ENCODE measurements at regions of chr10 and their contacts with region 1.

Region 1: DNA sequence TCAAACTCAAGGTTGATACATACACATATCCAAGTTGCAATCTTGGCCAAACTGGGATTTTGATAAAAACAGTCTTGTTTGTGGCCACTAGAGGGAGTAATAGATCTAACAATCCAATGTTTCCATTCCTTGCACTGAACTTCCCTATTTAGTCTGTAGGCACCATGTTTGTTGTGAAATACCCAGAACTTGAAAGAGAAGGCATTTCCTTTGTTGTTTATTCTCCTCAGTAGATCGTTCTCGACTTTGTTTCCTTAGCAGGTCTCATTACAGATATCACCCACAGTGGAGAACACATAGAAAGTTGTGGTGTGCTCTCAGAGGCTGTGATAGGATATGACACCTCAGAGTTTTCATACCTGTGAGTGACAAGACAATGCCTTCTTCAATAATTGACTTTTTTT is 70.3 kb upstream of the MXI1 start:
- DNase-seq: no peak
- ATAC-seq: peak; percentile 82
- H3K4me3 Mint-ChIP-seq: no peak overlapping the region
- H3K27ac Mint-ChIP-seq: no peak overlapping the region
- H3K4me1 Mint-ChIP-seq: peaks cover 31% of the 10 kb centered on the region
- H3K27me3 Mint-ChIP-seq: no peaks in the 10 kb centered on the region

Region 2: DNA sequence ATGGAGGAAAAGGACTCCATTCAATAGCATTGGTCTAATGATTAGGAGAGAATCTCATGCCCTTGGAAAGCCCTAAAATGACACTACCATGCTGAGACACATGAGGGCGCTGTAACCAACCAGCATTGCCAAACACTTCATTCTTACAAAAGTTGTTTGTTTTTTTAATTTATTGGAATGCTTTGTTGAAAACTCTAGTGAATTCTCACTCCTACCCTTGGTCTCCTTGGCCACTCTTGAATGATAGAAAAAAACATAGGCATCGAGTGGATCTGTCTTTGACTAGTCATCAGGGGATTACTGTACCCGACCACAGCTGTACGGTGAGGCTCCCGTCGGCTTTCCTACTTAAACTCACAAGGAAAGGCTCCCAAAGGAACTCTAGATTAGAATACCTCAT is 158.7 kb before region 1 on chr10:
- CTCF ChIA-PET with region 1: interaction called, 10 read pairs
- POLR2A ChIA-PET with region 1: no interaction called
- DNase-seq: peak; percentile 73
- ATAC-seq: peak; percentile 36
- H3K4me3 Mint-ChIP-seq: no peak overlapping the region
- H3K27ac Mint-ChIP-seq: no peak overlapping the region
- H3K4me1 Mint-ChIP-seq: no peaks in the 10 kb centered on the region
- H3K27me3 Mint-ChIP-seq: peaks cover 3% of the 10 kb centered on the region

Region 3: GRCh38 chr10:110158051-110159005 is 21.2 kb after region 1 on chr10:
- CTCF ChIA-PET with region 1: interaction called, 12 read pairs
- POLR2A ChIA-PET with region 1: no interaction called
- DNase-seq: no peak
- ATAC-seq: no peak
- H3K4me3 Mint-ChIP-seq: no peak overlapping the region
- H3K27ac Mint-ChIP-seq: no peak overlapping the region
- H3K4me1 Mint-ChIP-seq: peaks cover 43% of the 10 kb centered on the region
- H3K27me3 Mint-ChIP-seq: peaks cover 75% of the 10 kb centered on the region

Region 4: GRCh38 chr10:110218632-110219031 is 81.5 kb after region 1 on chr10:
- CTCF ChIA-PET with region 1: interaction called, 38 read pairs
- POLR2A ChIA-PET with region 1: no interaction called
- DNase-seq: no peak
- ATAC-seq: no peak
- H3K4me3 Mint-ChIP-seq: no peak overlapping the region
- H3K27ac Mint-ChIP-seq: no peak overlapping the region
- H3K4me1 Mint-ChIP-seq: peaks cover 69% of the 10 kb centered on the region
- H3K27me3 Mint-ChIP-seq: peaks cover 3% of the 10 kb centered on the region

Region 5: GRCh38 chr10:110273474-110273873 is 136.3 kb after region 1 on chr10:
- CTCF ChIA-PET with region 1: interaction called, 81 read pairs
- POLR2A ChIA-PET with region 1: no interaction called
- DNase-seq: peak; percentile 36
- ATAC-seq: peak; percentile 55
- H3K4me3 Mint-ChIP-seq: no peak overlapping the region
- H3K27ac Mint-ChIP-seq: no peak overlapping the region
- H3K4me1 Mint-ChIP-seq: peaks cover 31% of the 10 kb centered on the region
- H3K27me3 Mint-ChIP-seq: peaks cover 24% of the 10 kb centered on the region

Region 6: GRCh38 chr10:110285501-110285900 is 148.4 kb after region 1 on chr10:
- CTCF ChIA-PET with region 1: interaction called, 81 read pairs
- POLR2A ChIA-PET with region 1: no interaction called
- DNase-seq: no peak
- ATAC-seq: no peak
- H3K4me3 Mint-ChIP-seq: no peak overlapping the region
- H3K27ac Mint-ChIP-seq: no peak overlapping the region
- H3K4me1 Mint-ChIP-seq: no peaks in the 10 kb centered on the region
- H3K27me3 Mint-ChIP-seq: no peaks in the 10 kb centered on the region